Heart right ventricle (tissue), 16 donors: ENCODE measurements at regions of chr13 and their contacts with region 1.

Region 1: DNA sequence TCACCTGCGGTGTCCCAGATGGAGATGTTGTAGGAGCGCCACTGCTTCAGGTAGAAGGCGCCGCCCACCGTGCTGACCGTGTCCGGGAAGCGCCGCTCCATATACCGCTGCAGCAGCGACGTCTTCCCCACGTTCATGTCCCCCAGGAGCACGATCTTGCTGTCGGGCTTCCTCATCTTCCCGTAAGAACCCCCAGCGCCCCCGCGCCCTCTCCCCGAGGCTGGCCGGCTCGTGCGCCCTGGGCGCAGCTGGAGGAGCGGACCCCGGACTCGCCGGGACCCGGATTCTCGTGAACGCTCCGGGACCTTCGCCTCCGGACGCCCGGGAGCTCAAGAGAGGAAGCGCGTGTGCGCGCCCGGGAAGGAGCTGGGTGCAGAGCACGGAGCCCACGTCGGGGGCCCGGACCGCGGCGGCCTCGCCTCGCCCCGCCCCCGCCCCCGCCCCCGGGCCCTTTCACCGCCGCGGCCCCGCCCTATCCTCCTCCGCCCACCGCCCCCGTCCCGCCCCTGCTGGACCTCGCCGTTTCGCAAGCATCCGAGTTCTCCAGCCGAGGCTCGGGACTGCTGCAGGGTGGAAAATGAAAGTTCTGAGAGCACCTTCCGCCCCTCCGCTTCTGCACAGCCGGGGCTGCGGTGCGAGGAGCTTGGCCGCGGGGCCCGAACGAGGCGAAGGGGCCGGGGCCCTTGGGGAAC is at the start of gene RAB20:
- DNase-seq: peak; percentile 90 to 91
- ATAC-seq: peak; percentile 86 to 92 (median 88)
- H3K4me3 ChIP-seq: peak within 1 kb of the TSS; percentile 63 to 97 (median 85)
- H3K27ac ChIP-seq: peak within 1 kb of the TSS; percentile 82 to 98 (median 95)
- H3K4me1 ChIP-seq: peaks cover 3 to 58% (median 35%) of the 10 kb centered on the region in 9 donors
- H3K27me3 ChIP-seq: no peaks in the 10 kb centered on the region
- CTCF ChIP-seq: no peak
- total RNA-seq, gene RAB20: 9.4 to 40.8 (median 12.5) TPM

Region 2: DNA sequence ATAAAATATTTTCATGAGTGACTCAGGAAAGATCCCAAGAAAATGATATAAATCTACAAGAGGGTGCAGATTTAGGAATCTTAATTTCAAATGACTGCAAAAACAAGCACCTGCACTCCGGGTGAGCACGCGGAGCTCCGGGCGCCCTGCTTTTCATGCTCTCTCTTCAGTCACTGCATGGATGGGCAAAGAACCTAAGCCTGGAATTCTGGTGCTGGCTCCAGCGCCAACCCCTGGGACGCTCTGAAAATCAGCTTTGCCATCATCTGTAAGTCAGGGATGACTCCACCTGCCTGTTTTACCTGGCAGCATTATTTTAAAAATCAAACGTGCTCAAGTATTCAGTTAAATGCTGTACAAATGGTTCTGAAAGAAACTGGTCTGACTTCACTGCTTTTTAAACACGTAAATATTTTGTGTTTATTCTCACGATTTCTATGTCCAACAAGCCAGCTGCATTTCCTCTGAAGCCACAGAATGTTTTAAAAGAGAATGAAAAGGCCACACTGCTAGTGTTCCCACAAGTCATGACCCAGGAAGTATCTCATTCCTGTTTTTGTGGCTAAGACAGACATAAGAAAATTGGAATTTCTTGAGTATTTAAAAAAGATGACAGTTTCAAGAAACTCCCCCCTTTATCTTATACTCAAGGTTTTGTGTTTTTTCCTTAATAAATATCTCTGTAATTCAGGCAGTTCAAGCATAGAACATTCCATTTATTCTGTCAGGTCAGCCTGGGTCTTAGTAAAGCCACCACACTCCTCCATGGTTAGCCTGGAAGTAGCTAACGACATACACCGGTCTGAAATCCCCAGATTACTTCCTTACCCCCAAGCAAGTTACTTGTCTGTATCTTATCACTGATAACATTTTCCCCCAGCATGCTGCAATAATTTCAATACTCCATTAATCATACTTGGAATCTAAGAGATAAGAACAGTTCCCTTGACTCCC is 335.6 kb before region 1 on chr13:
- intact Hi-C with region 1: loop called in 1 of 10 experiments (anchors 10 kb)
- DNase-seq: no peak
- ATAC-seq: no peak
- H3K4me3 ChIP-seq: no peak overlapping the region
- H3K27ac ChIP-seq: peak overlapping the region in 9 of 10 donors; percentile 15 to 76 (median 52)
- H3K4me1 ChIP-seq: peaks cover 5 to 90% (median 63%) of the 10 kb centered on the region in 9 donors
- H3K27me3 ChIP-seq: no peaks in the 10 kb centered on the region
- CTCF ChIP-seq: no peak

Region 3: GRCh38 chr13:110455941-110456340 is 105.5 kb before region 1 on chr13:
- intact Hi-C with region 1: loop called in 2 of 10 experiments (anchors 10 kb)
- DNase-seq: peak; percentile 64 to 74
- ATAC-seq: peak; percentile 79 to 92 (median 88)
- H3K4me3 ChIP-seq: no peak overlapping the region
- H3K27ac ChIP-seq: peak overlapping the region in 1 of 10 donors; percentile 10
- H3K4me1 ChIP-seq: peaks cover 0 to 12% (median 5%) of the 10 kb centered on the region in 9 donors
- H3K27me3 ChIP-seq: no peaks in the 10 kb centered on the region
- CTCF ChIP-seq: peak; percentile 55 to 89 (median 80)

Region 4: DNA sequence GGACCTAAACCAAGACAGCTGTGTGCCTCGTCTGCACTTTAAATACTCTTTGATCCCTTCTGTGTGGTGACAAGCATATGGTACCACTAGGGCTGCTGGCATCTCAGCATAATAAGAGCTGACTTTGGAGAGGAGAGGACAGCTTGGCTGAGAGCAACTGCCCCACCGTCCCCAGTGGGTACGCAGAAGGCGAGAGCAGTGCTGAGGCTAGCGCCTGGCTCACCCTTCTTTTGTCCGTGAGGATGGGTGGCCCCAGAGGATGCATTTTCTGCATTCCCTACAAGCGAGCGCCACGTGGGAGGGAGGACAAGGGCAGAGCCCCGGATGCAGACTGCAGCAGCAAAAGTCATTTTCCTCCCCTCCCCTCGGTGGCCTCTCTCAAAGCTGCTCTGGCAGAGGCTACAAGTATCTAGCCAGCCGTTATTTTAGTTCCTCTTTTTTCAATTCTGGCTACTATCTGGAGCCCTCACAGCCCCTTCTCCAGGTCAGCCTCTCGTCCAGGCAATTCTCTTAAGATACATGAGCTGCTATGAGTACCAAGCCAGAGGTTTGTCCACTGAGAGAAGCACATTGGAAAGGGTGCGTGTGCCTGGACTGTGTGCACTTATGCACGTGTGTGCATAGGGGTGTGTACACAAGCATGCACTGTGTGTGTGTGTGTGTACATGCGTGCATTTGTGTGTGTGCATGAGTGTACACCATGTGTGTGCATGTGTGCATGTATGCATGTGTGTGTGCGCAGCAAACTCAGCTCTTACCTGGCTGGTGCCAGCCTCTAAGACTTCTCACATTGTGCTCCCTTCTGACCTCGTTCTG is 51.3 kb before region 1 on chr13:
- intact Hi-C with region 1: loop called in 5 of 10 experiments (anchors 5 to 10 kb)
- DNase-seq: peak; percentile 40 to 51
- ATAC-seq: peak; percentile 3 to 63 (median 27)
- H3K4me3 ChIP-seq: no peak overlapping the region
- H3K27ac ChIP-seq: peak overlapping the region; percentile 16 to 96 (median 79)
- H3K4me1 ChIP-seq: peaks cover 5 to 55% (median 36%) of the 10 kb centered on the region in 9 donors
- H3K27me3 ChIP-seq: no peaks in the 10 kb centered on the region
- CTCF ChIP-seq: no peak

Region 5: GRCh38 chr13:110525328-110526319 is 35.9 kb before region 1 on chr13:
- intact Hi-C with region 1: loop called in 5 of 10 experiments (anchors 2 to 5 kb)
- DNase-seq: peak; percentile 51 to 54
- ATAC-seq: peak; percentile 18 to 75 (median 64)
- H3K4me3 ChIP-seq: no peak overlapping the region
- H3K27ac ChIP-seq: peak overlapping the region; percentile 31 to 92 (median 85)
- H3K4me1 ChIP-seq: peaks cover 22 to 91% (median 55%) of the 10 kb centered on the region in 9 donors
- H3K27me3 ChIP-seq: no peaks in the 10 kb centered on the region
- CTCF ChIP-seq: no peak

Region 6: GRCh38 chr13:110546930-110547329 is 14.6 kb before region 1 on chr13:
- intact Hi-C with region 1: loop called in 1 of 10 experiments (anchors 2 kb)
- DNase-seq: peak; percentile 78 to 89
- ATAC-seq: peak; percentile 80 to 94 (median 89)
- H3K4me3 ChIP-seq: no peak overlapping the region
- H3K27ac ChIP-seq: peak overlapping the region in 8 of 10 donors; percentile 45 to 79 (median 62)
- H3K4me1 ChIP-seq: peaks cover 0 to 54% (median 34%) of the 10 kb centered on the region in 9 donors
- H3K27me3 ChIP-seq: no peaks in the 10 kb centered on the region
- CTCF ChIP-seq: no peak

Region 7: DNA sequence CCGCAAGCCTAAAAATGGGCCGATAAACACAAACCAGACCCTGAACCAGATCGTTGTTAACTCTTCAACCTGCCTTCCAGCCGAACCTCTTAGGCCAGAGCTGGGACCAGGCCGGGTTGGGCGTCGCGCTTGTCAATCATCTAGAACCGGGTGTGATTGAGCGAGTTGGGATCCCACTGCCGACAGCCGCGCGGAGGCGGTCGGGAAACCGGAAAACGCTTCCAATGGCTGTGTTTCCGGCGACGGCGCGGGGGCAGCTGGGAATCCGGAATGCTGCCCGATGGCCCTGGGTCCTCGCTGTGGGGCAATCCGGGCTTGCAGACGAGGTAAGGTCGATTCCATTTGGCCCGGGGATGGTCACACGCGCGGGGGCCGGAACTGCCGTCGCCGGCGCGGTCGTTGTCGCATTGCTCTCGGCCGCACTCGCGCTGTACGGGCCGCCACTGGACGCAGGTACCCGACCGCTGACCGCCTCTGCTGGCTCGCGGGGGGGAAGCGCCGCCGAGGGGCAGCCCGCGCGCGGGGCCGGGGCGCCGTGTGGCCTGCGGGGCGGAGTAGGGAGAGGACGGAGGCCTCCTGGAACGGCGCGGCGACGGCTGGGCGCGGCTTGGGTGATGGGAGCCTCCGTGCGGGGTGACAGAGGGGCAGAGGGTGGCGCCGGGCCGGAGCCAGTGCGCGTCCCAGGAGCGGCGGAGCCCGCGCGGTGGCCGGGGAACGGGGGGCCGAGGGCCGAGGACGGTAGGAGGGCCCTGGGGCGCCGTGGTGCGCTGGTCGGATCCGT is 54.0 kb after region 1 on chr13 and contains the start of gene NAXD:
- intact Hi-C with region 1: loop called in 1 of 10 experiments (anchors 5 kb)
- DNase-seq: peak; percentile 95 to 96
- ATAC-seq: peak; percentile 93 to 98 (median 97)
- H3K4me3 ChIP-seq: peak within 1 kb of the TSS; percentile 69 to 98 (median 82)
- H3K27ac ChIP-seq: peak within 1 kb of the TSS; percentile 78 to 98 (median 92)
- H3K4me1 ChIP-seq: peaks cover 0 to 48% (median 37%) of the 10 kb centered on the region in 9 donors
- H3K27me3 ChIP-seq: peaks cover 0 to 9% (median 0%) of the 10 kb centered on the region in 7 donors
- CTCF ChIP-seq: peak in 1 of 9 donors; percentile 7
- total RNA-seq, gene NAXD: 24.7 to 33.9 (median 27.8) TPM